Tibial artery (tissue), 4 donors: ENCODE measurements at regions of chrX and their contacts with region 1.

Region 1: GRCh38 chrX:16436348-16437188 is 213.4 kb upstream of the S100G start:
- DNase-seq: peak; percentile 72 to 77
- H3K4me3 ChIP-seq: no peak overlapping the region
- H3K27ac ChIP-seq: no peak overlapping the region
- H3K4me1 ChIP-seq: no peaks in the 10 kb centered on the region
- H3K27me3 ChIP-seq: no peaks in the 10 kb centered on the region
- CTCF ChIP-seq: peak; percentile 40 to 56

Region 2: GRCh38 chrX:16666541-16666940 is 230.0 kb after region 1 on chrX:
- intact Hi-C with region 1: loop called (anchors 10 kb)
- DNase-seq: no peak
- H3K4me3 ChIP-seq: no peak overlapping the region
- H3K27ac ChIP-seq: no peak overlapping the region
- H3K4me1 ChIP-seq: no peaks in the 10 kb centered on the region
- H3K27me3 ChIP-seq: no peaks in the 10 kb centered on the region
- CTCF ChIP-seq: no peak

Region 3: DNA sequence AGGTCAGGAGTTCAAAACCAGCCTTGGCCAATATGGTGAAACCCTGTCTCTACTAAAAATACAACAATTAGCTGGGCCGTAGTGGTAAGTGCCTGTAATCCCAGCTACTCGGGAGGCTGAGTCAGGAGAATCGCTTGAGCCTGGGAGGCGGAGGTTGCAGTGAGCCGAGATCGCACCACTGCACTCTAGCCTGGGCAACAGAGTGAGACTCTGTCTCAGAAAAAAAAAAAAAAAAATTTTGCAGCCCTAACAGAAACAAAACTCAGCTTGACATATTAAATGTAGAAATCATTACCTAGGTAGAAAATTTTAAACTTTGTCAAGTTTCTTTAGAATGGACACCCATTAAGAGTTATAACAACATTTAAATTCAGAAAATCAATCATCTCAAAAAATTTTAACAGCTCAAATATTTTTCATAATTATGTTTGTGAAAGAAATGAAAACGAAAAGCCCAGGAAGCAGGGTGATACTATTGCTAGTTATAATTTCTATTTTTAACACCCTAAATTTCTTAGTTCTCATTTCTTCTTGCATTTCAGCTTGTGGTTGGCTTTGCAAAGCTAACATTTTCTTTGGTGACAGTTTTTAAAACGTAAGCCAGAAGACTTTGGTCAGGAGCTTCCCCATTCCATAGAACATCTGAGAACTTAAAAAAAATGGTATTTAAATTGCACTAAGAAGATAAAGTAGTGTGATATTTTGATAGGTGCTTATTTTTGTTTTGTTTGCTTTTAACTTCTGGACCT is 466.9 kb after region 1 on chrX:
- intact Hi-C with region 1: no loop called
- DNase-seq: no peak
- H3K4me3 ChIP-seq: no peak overlapping the region
- H3K27ac ChIP-seq: no peak overlapping the region
- H3K4me1 ChIP-seq: no peaks in the 10 kb centered on the region
- H3K27me3 ChIP-seq: no peaks in the 10 kb centered on the region
- CTCF ChIP-seq: no peak